ENCODE measurements at regions of chr6 and their contacts with region 1.

Region 1: DNA sequence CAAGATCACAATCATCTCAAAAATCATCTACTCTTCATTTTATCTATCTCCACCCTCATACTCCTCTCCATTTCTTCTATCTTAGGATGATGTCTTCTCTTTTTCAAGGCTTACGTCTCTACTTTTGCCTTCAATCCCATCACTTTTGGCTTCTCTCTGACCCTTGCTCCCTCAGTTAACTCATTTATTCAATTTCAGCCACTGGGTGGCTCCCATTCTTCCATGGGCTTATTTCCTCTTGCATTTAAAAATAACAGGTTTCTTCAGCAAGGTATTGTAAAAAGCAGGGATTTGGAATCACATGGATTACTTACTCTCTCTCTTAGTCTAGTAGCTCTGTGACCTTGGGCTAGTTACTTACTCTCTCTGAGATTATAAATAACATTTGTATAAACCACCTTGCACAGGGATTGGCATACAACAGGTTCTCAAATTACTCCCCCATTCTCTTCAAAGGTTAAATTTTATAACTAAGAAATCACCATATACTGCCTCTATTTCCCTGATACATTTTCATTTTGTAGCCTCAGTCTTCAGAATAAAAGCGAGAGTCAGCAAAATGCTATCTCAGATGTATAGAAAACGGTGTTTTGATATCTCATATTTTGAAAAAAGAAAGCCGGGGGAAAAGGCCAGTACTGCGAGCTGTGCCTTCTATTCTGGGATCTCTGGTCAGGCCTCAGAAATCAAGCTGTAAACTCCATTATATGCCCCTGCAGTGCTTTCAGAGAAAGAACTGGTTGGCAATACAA is 5.5 kb downstream of the ZSCAN12 start:
- DNase-seq: no peak
- H3K4me3 ChIP-seq: no peak overlapping the region
- H3K27ac ChIP-seq: no peak overlapping the region
- H3K4me1 ChIP-seq: peaks cover 24% of the 10 kb centered on the region
- H3K27me3 ChIP-seq: no peaks in the 10 kb centered on the region
- CTCF ChIP-seq: peak; percentile 12 to 33

Region 2: GRCh38 chr6:28371706-28372451 is 22.2 kb before region 1 on chr6:
- CTCF ChIA-PET with region 1: interaction called, 45 read pairs
- dilution Hi-C with region 1: no loop called
- in situ Hi-C with region 1: no loop called
- intact Hi-C with region 1: no loop called
- DNase-seq: no peak
- H3K4me3 ChIP-seq: no peak overlapping the region
- H3K27ac ChIP-seq: no peak overlapping the region
- H3K4me1 ChIP-seq: no peaks in the 10 kb centered on the region
- H3K27me3 ChIP-seq: no peaks in the 10 kb centered on the region
- CTCF ChIP-seq: no peak